ENCODE measurements at regions of chr1 and their contacts with region 1.

Region 1: DNA sequence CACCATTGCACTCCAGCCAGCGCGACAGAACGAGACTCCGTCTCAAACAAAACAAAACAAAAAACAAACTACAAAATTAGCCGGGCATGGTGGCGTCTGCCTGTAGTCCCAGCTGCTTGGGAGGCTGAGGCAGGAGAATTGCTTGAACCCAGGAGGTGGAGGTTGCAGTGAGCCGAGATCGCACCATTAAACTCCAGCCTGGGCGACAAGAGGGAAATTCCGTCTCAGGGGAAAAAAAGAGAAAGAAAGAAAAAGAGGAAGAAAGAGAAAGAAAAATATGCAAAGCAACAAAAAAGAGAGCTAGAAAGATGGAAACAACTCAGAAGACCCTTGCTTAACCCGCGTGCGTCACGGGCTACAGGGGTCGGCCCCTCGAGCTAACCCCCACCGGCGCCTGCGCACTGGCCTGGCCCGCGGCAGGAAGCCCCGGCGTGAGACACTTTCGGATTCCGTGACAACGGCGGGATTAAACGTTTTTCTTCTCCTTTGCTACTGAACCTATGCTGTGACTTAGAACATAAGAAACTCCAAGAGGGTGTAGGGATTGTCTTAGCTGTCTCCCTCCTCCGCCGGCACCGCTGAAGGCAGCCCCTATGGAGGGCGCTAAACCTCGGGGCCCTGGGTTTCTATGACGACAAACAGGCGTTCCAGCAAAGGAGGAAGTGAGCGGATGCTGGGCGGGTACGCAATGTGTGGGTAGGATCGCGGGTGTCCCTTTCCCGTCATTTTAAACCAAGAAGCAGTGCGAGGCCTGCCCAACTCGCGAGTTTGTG is at the start of gene AXDND1:
- DNase-seq: peak; percentile 73
- H3K4me3 ChIP-seq: peak within 1 kb of the TSS; percentile 57 to 82 (median 70)
- H3K27ac ChIP-seq: peak within 1 kb of the TSS; percentile 92
- H3K4me1 ChIP-seq: peaks cover 4% of the 10 kb centered on the region
- H3K27me3 ChIP-seq: no peaks in the 10 kb centered on the region
- CTCF ChIP-seq: peak in 1 of 2 donors; percentile 38
- total RNA-seq, gene AXDND1: 0.67 to 1.3 TPM

Region 2: GRCh38 chr1:178542560-178543356 is 822.7 kb before region 1 on chr1:
- CTCF ChIA-PET with region 1: no interaction called
- dilution Hi-C with region 1: no loop called
- in situ Hi-C with region 1: loop called in 1 of 2 experiments (anchors 25 kb)
- intact Hi-C with region 1: no loop called
- DNase-seq: peak; percentile 76
- H3K4me3 ChIP-seq: peak overlapping the region; percentile 49 to 85 (median 71)
- H3K27ac ChIP-seq: peak overlapping the region; percentile 17
- H3K4me1 ChIP-seq: peaks cover 20% of the 10 kb centered on the region
- H3K27me3 ChIP-seq: no peaks in the 10 kb centered on the region
- CTCF ChIP-seq: peak; percentile 73 to 90

Region 3: GRCh38 chr1:179002552-179003345 is 362.8 kb before region 1 on chr1:
- CTCF ChIA-PET with region 1: no interaction called
- dilution Hi-C with region 1: no loop called
- in situ Hi-C with region 1: no loop called
- intact Hi-C with region 1: loop called (anchors 10 kb)
- DNase-seq: peak; percentile 27
- H3K4me3 ChIP-seq: no peak overlapping the region
- H3K27ac ChIP-seq: no peak overlapping the region
- H3K4me1 ChIP-seq: no peaks in the 10 kb centered on the region
- H3K27me3 ChIP-seq: no peaks in the 10 kb centered on the region
- CTCF ChIP-seq: peak; percentile 81 to 96

Region 4: DNA sequence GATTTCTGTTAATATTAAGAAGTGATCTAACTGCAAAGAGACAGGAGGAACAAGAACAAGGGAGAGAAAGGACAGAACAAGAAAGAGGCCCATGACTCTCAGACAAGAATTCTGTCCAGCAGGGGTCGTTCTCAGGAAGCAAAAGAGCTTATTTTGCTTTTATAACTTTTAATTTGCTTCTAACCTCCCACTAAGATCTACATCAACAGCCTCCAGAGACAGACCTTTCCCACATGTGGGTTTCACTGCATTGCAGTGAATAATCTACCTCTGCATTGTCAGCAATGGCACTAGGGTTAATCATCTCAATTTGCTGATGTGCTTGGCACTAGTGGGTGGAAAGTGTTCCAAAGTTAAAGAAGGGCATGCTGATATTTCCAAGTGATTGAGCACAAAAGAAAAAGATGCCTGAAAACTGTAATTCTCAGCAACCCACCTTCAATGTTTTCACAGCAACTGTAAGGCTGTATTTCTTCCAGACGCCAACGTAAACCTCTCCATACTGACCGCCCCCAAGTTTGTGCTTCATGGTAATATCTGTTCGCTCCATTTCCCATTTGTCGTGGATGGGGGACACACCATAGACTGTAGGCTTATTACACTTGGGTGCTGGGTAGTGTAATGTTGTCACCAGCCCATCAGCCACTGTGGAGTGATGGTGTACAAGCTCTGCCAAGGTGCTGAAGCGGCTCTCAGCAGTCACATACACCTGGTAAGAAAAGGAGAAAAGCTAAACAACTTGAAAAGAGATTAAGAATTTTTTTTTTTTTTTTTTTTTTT is 244.2 kb before region 1 on chr1:
- CTCF ChIA-PET with region 1: no interaction called
- dilution Hi-C with region 1: no loop called
- in situ Hi-C with region 1: no loop called
- intact Hi-C with region 1: loop called (anchors 5 kb)
- DNase-seq: no peak
- H3K4me3 ChIP-seq: no peak overlapping the region
- H3K27ac ChIP-seq: no peak overlapping the region
- H3K4me1 ChIP-seq: peaks cover 21% of the 10 kb centered on the region
- H3K27me3 ChIP-seq: no peaks in the 10 kb centered on the region
- CTCF ChIP-seq: peak; percentile 55 to 64

Region 5: GRCh38 chr1:179190861-179191260 is 174.6 kb before region 1 on chr1:
- CTCF ChIA-PET with region 1: no interaction called
- dilution Hi-C with region 1: no loop called
- in situ Hi-C with region 1: no loop called
- intact Hi-C with region 1: loop called (anchors 2 kb)
- DNase-seq: no peak
- H3K4me3 ChIP-seq: no peak overlapping the region
- H3K27ac ChIP-seq: no peak overlapping the region
- H3K4me1 ChIP-seq: no peaks in the 10 kb centered on the region
- H3K27me3 ChIP-seq: no peaks in the 10 kb centered on the region
- CTCF ChIP-seq: no peak

Region 6: GRCh38 chr1:179278920-179279319 is 86.6 kb before region 1 on chr1:
- CTCF ChIA-PET with region 1: no interaction called
- dilution Hi-C with region 1: no loop called
- in situ Hi-C with region 1: no loop called
- intact Hi-C with region 1: no loop called
- DNase-seq: no peak
- H3K4me3 ChIP-seq: no peak overlapping the region
- H3K27ac ChIP-seq: no peak overlapping the region
- H3K4me1 ChIP-seq: no peaks in the 10 kb centered on the region
- H3K27me3 ChIP-seq: no peaks in the 10 kb centered on the region
- CTCF ChIP-seq: no peak

Region 7: DNA sequence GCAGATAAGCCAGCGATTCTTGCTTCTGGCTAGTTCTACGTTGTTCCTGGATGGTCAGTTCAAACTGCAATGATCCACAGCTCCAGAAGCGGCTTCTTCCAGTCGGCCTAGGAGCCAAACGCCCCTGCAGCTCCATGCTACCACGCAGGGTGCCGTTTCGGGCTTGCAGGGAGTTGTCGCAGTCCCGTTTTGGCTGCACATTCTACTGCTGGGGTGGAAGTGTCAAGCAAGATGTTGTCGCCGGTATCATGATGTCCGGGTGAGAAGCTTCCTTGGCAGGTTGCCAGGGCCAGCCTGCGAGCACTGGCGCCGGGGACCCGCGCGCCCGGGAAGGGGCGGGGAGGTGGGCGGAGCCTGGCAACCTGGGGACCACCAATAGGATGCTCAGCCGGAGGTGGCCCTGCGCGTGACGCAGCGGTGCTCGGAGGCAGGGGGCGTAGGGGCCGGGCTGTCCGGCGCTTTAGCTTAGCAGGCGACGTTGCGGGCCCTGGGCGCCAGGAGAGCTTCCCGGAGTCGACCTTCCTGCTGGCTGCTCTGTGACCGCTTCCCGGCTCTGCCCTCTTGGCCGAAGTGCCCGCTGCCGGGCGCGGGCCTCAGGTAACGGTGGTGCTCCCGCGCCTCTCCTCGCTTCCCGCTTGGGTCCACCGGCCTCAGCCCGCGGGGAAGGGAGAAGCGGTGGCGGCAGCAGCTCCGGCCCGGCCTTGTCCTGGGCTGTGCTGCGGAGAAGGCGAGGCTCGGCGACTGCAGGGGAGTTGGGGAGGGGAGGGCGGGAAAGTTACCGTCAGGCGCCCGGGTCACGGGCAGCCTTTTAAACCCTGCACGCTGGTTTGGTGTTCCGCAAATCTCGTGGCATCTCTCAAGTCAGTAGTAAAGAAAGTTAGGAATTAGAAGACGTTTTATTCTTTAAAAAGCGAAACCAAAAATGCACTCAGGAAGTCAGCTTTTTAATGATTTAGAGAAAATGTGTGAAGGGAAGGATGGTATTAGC is 71.9 kb before region 1 on chr1 and contains the start of gene SOAT1:
- CTCF ChIA-PET with region 1: no interaction called
- dilution Hi-C with region 1: no loop called
- in situ Hi-C with region 1: no loop called
- intact Hi-C with region 1: loop called (anchors 1 kb)
- DNase-seq: peak; percentile 74
- H3K4me3 ChIP-seq: peak within 1 kb of the TSS; percentile 68 to 97 (median 85)
- H3K27ac ChIP-seq: peak within 1 kb of the TSS; percentile 52
- H3K4me1 ChIP-seq: peaks cover 6% of the 10 kb centered on the region
- H3K27me3 ChIP-seq: no peaks in the 10 kb centered on the region
- CTCF ChIP-seq: no peak
- total RNA-seq, gene SOAT1: 22.3 to 40.3 TPM

Region 8: GRCh38 chr1:179516976-179517705 is 151.6 kb after region 1 on chr1:
- CTCF ChIA-PET with region 1: no interaction called
- dilution Hi-C with region 1: no loop called
- in situ Hi-C with region 1: no loop called
- intact Hi-C with region 1: no loop called
- DNase-seq: no peak
- H3K4me3 ChIP-seq: no peak overlapping the region
- H3K27ac ChIP-seq: no peak overlapping the region
- H3K4me1 ChIP-seq: no peaks in the 10 kb centered on the region
- H3K27me3 ChIP-seq: no peaks in the 10 kb centered on the region
- CTCF ChIP-seq: no peak